ENCODE measurements at regions of chr4 and their contacts with region 1.

Region 1: DNA sequence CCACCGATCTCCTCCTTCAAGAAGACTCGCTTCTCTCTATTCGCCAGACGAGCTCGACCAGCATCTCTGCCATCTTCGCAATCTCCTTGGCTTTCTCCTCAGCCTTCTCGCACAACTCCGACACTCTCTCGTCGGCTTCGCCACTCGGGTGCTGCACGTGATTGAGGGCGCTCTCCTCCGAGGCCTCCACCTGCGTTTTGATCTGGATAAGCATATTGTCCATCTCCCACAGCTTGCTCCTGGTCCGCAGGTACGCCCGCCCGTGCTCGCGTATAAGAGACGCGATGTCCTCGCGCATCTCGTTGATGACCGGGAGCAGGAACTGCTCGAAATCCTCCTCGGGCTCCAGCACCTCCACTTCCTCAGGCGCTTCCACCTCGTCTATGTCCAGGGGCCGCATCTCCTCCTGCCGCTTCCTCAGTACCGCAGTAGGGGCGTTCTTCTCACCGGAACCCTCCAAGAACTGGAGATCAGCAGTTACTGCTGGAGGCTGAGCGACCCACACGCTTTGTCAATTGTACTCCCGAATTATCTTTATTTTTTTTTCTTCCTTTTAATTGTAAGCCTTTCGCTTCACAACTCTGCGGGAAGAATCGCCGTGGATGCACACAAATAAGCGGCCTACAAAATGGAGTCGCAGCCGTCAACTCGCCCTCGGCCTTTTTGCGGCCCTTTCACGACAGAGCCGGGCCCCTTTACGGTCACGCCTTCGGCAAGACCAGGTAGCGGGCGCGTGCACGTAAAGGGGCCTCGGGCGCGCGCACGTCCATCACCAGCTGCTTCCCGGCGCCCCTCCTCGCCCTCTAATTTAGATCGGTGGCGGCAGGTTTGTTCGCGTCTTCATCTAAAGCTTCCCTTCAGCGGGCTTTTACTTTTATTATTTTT is at the start of gene MRFAP1L1:
- DNase-seq: peak; percentile 94
- CTCF ChIP-seq: no peak

Region 2: DNA sequence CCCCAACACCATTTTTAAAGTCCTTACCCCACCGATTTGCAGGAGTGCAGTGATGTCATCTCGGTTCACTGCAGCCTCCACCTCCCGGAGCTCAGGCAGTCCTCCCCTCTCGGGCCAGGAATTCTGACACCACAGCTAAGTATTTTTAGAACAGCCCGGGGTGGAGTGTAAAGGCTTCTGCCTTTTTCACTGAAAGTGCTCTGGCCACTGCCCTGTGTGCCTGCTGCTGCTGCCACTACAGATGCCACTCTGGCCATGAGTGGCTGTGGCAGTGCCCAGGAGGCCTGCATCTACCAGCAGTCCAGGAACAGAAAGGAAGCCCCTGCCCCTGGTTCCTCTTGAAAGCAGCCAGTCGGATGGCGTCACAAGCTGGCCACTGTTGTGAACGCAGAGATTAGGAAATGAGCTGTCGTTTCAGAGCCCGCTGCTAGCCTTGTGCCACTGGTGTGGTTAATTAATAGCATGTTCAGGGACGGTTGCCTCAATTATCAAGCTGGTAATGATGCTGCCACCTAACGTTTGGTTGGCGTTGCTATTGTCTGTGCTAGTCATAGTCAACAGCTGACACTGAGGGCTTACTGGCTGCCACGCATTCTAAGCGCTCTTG is 176.6 kb after region 1 on chr4:
- in situ Hi-C with region 1: loop called (anchors 25 kb)
- DNase-seq: peak; percentile 41
- CTCF ChIP-seq: no peak

Measured in GM13976 (cell line).